ENCODE measurements at regions of chr16 and their contacts with region 1.

Region 1: GRCh38 chr16:66406534-66407221 is 20.4 kb upstream of the BEAN1 start:
- DNase-seq: peak; percentile 92
- H3K4me3 Mint-ChIP-seq: peak overlapping the region; percentile 80
- H3K27ac Mint-ChIP-seq: no peak overlapping the region
- H3K4me1 Mint-ChIP-seq: peaks cover 24% of the 10 kb centered on the region
- H3K27me3 Mint-ChIP-seq: peaks cover 2% of the 10 kb centered on the region

Region 2: GRCh38 chr16:65950211-65950610 is 456.5 kb before region 1 on chr16:
- CTCF ChIA-PET with region 1: no interaction called
- POLR2A ChIA-PET with region 1: no interaction called
- intact Hi-C with region 1: no loop called
- DNase-seq: no peak
- H3K4me3 Mint-ChIP-seq: no peak overlapping the region
- H3K27ac Mint-ChIP-seq: no peak overlapping the region
- H3K4me1 Mint-ChIP-seq: no peaks in the 10 kb centered on the region
- H3K27me3 Mint-ChIP-seq: no peaks in the 10 kb centered on the region

Region 3: GRCh38 chr16:66469291-66469946 is 62.7 kb after region 1 on chr16:
- CTCF ChIA-PET with region 1: interaction called, 27 read pairs
- POLR2A ChIA-PET with region 1: no interaction called
- intact Hi-C with region 1: loop called (anchors 1 kb)
- DNase-seq: no peak
- H3K4me3 Mint-ChIP-seq: no peak overlapping the region
- H3K27ac Mint-ChIP-seq: no peak overlapping the region
- H3K4me1 Mint-ChIP-seq: peaks cover 7% of the 10 kb centered on the region
- H3K27me3 Mint-ChIP-seq: peaks cover 7% of the 10 kb centered on the region

Region 4: GRCh38 chr16:66516808-66517585 is 110.3 kb after region 1 on chr16:
- CTCF ChIA-PET with region 1: interaction called, 26 read pairs
- POLR2A ChIA-PET with region 1: no interaction called
- intact Hi-C with region 1: loop called (anchors 1 kb)
- DNase-seq: peak; percentile 95
- H3K4me3 Mint-ChIP-seq: peak overlapping the region; percentile 87
- H3K27ac Mint-ChIP-seq: peak overlapping the region; percentile 99
- H3K4me1 Mint-ChIP-seq: peaks cover 71% of the 10 kb centered on the region
- H3K27me3 Mint-ChIP-seq: no peaks in the 10 kb centered on the region

Region 5: DNA sequence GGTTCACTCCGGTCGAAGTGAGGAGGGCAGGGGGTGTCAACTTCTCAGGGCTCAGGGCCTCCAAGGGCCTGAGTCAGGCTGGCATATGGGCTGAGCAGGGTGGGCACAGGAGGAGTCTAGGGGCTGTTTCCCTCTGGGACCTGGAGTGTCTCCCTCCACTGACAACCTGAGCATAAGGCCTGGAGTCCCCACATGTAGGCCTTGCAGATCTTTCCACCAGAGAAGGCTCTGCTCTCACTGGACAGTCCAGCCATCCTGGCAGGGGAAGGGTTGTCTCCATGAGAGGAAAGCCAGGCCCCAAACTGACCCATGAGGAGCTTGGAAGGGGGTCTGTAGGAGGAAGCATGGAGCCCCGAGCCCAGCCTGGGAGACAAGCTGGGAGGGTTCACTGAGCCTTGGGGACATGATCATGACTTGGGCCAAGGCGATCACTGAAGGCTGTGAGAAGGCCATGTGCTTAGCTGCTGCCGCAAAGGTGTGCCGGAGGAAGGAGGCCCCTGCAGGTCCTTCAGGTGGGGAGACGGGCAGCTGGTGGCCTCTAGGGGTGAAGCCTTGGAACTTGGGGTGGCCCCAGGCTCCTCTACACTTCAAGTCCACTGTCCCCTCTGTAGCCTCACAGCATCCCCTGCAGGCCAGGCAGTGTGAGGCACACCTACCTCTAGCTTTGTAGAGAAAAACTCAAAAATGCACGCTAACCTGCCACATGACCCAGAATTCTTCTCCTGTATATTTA is 182.5 kb after region 1 on chr16:
- CTCF ChIA-PET with region 1: interaction called, 28 read pairs
- POLR2A ChIA-PET with region 1: no interaction called
- intact Hi-C with region 1: loop called (anchors 1 kb)
- DNase-seq: peak; percentile 84
- H3K4me3 Mint-ChIP-seq: peak overlapping the region; percentile 64
- H3K27ac Mint-ChIP-seq: peak overlapping the region; percentile 39
- H3K4me1 Mint-ChIP-seq: peaks cover 23% of the 10 kb centered on the region
- H3K27me3 Mint-ChIP-seq: no peaks in the 10 kb centered on the region

Region 6: GRCh38 chr16:66728117-66728787 is 321.6 kb after region 1 on chr16:
- CTCF ChIA-PET with region 1: interaction called, 10 read pairs
- POLR2A ChIA-PET with region 1: no interaction called
- intact Hi-C with region 1: no loop called
- DNase-seq: no peak
- H3K4me3 Mint-ChIP-seq: no peak overlapping the region
- H3K27ac Mint-ChIP-seq: no peak overlapping the region
- H3K4me1 Mint-ChIP-seq: peaks cover 2% of the 10 kb centered on the region
- H3K27me3 Mint-ChIP-seq: no peaks in the 10 kb centered on the region

Measured in activated CD4-positive, alpha-beta memory T cell treated with anti-CD3 and anti-CD28 coated beads for 36 hours (primary cell).